K562 (cell line): ENCODE measurements at regions of chr4 and their contacts with region 1.

Region 1: DNA sequence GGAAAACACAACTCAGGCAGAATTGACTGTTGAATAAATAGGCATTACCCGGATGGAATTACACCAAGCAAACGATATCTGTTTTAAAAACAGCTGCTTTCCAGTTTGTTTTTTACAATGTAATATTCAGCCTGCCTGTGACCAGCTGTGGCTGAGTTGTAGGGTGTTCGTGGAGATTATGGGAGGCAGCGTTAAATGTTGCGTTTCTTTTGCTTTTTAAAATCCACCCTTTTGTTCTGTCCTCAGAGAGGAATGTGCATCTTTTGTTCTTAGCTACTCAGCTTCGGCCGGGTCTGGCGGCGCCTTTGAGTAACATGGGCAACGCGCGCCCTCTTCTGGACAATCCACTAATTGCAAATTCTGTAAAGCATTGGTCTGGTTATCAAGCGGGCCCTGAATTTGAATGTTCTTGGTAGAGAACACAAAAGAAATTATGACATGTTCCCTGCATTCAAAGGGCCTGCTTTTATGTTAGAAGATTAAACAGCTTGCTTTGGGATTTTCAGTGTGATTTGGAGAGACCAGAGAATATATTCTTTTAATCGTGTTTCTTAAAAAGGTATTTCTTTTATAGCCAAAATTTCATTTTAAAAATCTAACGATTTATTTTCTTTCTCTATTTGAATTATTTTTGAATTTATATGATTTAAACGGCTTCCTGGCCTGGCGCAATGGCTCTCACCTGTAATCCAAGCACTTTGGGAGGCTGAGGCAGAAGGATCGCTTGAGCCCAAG is 76.3 kb upstream of the TRIM2 start:
- DNase-seq: peak; percentile 61 to 84 (median 76)
- ATAC-seq: peak; percentile 96
- H3K4me3 ChIP-seq: no peak overlapping the region
- H3K27ac ChIP-seq: no peak overlapping the region
- H3K4me1 ChIP-seq: no peaks in the 10 kb centered on the region
- H3K27me3 ChIP-seq: peaks cover 0 to 11% of the 10 kb centered on the region in 2 experiments; a peak in 3 of 5 replicates
- CTCF ChIP-seq: peak; percentile 86 to 88 (median 86)
- EP300 ChIP-seq: no peak
- POLR2A ChIP-seq: no peak
- RAD21 ChIP-seq: peak; percentile 79 to 90

Region 2: GRCh38 chr4:152460488-152460887 is 667.4 kb before region 1 on chr4:
- CTCF ChIA-PET with region 1: no interaction called
- POLR2A ChIA-PET with region 1: no interaction called
- in situ Hi-C with region 1: no loop called
- intact Hi-C with region 1: loop called (anchors 10 kb)
- DNase-seq: peak in 1 of 4 experiments; percentile 15
- ATAC-seq: peak; percentile 60
- H3K4me3 ChIP-seq: no peak overlapping the region
- H3K27ac ChIP-seq: no peak overlapping the region
- H3K4me1 ChIP-seq: no peaks in the 10 kb centered on the region; a peak in 4 of 5 replicates
- H3K27me3 ChIP-seq: no peaks in the 10 kb centered on the region
- CTCF ChIP-seq: peak; percentile 7 to 55 (median 24); a peak in 2 of 6 replicates
- EP300 ChIP-seq: no peak
- POLR2A ChIP-seq: no peak
- RAD21 ChIP-seq: peak; percentile 75 to 80

Region 3: DNA sequence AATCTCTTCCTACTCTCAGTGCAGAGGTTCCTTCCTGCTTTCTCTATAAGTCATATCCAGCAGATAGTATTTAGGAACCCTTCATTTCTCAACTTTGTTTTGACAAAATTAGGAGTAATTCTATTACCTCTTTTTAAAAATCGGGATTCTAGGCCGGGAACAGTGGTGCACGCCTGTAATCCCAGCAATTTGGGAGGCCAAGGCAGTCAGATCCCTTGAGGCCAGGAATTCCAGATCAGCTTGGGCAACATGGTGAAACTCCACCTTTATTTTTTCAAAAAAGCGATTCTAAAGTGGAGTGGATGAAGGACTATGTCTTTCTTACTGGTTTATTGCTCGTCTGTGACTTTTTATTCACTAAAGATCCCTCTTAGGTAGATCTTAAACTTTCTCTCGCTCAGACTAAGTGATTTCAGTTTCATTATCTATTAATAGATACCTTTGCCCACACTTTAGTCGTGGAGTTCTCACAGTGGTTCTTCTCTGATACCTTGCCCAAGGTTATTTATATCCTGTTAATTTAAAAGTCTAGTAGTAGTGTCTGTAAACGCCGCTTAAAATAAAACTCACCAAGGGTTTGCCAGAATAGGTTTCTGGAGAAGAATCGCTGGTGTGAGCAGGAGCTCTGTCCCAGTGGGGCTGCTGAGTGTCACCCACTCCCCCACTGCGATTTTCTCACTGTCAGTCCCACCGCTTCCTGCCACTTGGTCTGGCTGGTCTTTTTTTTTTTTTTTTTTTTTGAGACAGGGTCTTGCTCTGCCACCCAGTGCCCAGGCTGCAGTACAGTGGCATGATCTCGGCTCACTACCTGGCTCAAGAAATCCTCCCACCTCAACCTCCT is 311.2 kb after region 1 on chr4:
- CTCF ChIA-PET with region 1: no interaction called
- POLR2A ChIA-PET with region 1: no interaction called
- in situ Hi-C with region 1: no loop called
- intact Hi-C with region 1: no loop called
- DNase-seq: no peak
- ATAC-seq: no peak
- H3K4me3 ChIP-seq: no peak overlapping the region
- H3K27ac ChIP-seq: no peak overlapping the region
- H3K4me1 ChIP-seq: peaks cover 0 to under 1% of the 10 kb centered on the region in 2 experiments; a peak in 2 of 5 replicates
- H3K27me3 ChIP-seq: no peaks in the 10 kb centered on the region
- CTCF ChIP-seq: no peak
- EP300 ChIP-seq: no peak
- POLR2A ChIP-seq: no peak
- RAD21 ChIP-seq: no peak